A549 (cell line): ENCODE measurements at regions of chr17 and their contacts with region 1.

Region 1: DNA sequence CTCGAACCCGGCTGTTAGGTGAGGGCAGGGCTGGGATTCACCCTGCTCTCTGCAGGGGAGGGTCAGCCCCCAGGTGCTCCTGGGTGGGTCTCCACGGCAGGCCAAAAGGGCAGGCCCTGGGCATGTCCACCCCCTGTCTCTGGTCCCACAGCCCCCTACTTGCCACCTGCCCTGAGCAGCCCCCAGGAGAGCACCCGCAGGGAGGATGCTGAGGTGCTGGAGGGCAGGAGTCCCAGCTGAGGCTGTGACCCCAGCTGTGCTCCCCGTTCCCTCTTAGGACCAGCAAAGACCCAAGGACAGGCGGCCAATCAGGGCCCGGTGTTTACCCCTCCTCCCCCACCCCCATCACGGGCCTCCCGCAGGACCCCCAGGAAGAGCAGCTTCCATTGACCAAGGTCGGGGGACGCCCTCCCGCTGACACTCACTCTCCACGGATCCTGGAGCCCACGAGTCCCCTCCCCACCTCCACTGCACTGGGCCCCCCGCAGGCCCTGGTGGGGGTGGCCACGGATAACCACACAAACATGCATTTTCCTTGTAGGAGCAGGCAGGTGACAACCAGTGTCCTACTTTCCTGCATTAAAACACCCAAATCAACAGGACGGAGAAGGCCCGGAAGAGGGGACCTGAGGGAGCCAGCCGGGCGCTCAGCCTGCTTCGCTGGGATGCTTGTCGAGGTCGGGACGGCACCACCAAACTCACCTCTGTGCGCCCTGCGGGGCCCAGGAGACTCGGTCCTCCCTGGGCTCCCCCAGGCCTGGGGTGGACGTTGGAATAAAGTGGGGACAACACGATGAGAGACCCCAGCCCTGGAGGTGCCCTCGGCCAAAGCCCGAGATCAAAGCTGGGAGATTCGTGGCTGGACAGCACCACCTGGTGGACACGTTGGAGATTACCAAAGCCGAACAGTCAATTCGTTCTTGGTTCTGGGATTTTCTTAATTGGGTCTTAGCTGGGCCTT is 22.5 kb upstream of the ENPP7 start:
- DNase-seq: peak; percentile 66 to 71
- ATAC-seq: peak; percentile 58 to 80
- H3K4me3 ChIP-seq: no peak overlapping the region
- H3K27ac ChIP-seq: peak overlapping the region; percentile 63 to 77; a peak in 5 of 6 replicates
- H3K4me1 ChIP-seq: peaks cover 17% of the 10 kb centered on the region
- CTCF ChIP-seq: peak; percentile 96
- EP300 ChIP-seq: no peak
- POLR2A ChIP-seq: no peak
- RAD21 ChIP-seq: peak; percentile 96 to 97

Region 2: GRCh38 chr17:79065105-79065670 is 643.0 kb before region 1 on chr17:
- CTCF ChIA-PET with region 1: interaction called, 12 read pairs
- POLR2A ChIA-PET with region 1: no interaction called
- DNase-seq: peak; percentile 57 to 73
- ATAC-seq: peak; percentile 64 to 81; a peak in 5 of 6 replicates
- H3K4me3 ChIP-seq: no peak overlapping the region
- H3K27ac ChIP-seq: no peak overlapping the region
- H3K4me1 ChIP-seq: no peaks in the 10 kb centered on the region
- CTCF ChIP-seq: peak; percentile 80
- EP300 ChIP-seq: no peak
- POLR2A ChIP-seq: no peak
- RAD21 ChIP-seq: peak; percentile 69 to 76

Region 3: DNA sequence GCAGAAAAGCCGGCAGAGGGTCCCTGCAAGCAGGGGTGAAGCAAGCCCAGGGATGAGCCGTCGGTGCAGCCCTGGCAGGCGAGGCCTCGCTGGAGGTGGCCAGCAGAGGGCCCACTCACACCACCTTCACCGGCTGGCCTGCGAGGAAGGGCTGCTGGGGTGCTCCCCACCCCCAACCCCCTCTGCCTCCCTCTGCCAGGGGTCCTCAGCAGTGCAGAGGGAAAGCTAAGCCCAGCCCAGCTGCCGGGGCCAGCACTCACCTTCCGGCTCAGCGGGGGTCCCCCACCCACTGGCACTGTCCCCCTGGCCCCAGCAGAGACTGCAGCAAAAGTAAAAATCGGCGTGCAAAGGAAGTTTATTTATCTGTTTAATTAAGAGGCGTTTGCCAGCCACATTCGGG is 520.2 kb before region 1 on chr17:
- CTCF ChIA-PET with region 1: interaction called, 32 read pairs
- POLR2A ChIA-PET with region 1: no interaction called
- DNase-seq: peak; percentile 50 to 88
- ATAC-seq: peak; percentile 57 to 79; a peak in 4 of 6 replicates
- H3K4me3 ChIP-seq: no peak overlapping the region
- H3K27ac ChIP-seq: no peak overlapping the region
- H3K4me1 ChIP-seq: no peaks in the 10 kb centered on the region; the same call in 2 of the 3 replicates
- CTCF ChIP-seq: peak; percentile 88
- EP300 ChIP-seq: no peak
- POLR2A ChIP-seq: no peak
- RAD21 ChIP-seq: peak; percentile 82 to 94

Region 4: GRCh38 chr17:79695797-79696609 is 12.2 kb before region 1 on chr17:
- CTCF ChIA-PET with region 1: interaction called, 73 read pairs
- POLR2A ChIA-PET with region 1: no interaction called
- DNase-seq: no peak
- ATAC-seq: peak; percentile 22 to 65; a peak in 4 of 6 replicates
- H3K4me3 ChIP-seq: no peak overlapping the region
- H3K27ac ChIP-seq: peak overlapping the region; percentile 19 to 51; a peak in 5 of 6 replicates
- H3K4me1 ChIP-seq: peaks cover 35% of the 10 kb centered on the region
- CTCF ChIP-seq: no peak
- EP300 ChIP-seq: no peak
- POLR2A ChIP-seq: no peak
- RAD21 ChIP-seq: no peak

Region 5: GRCh38 chr17:79721993-79722671 is 13.9 kb after region 1 on chr17:
- CTCF ChIA-PET with region 1: interaction called, 32 read pairs
- POLR2A ChIA-PET with region 1: interaction called, 6 read pairs
- DNase-seq: peak; percentile 67 to 87
- ATAC-seq: peak; percentile 84 to 95
- H3K4me3 ChIP-seq: no peak overlapping the region
- H3K27ac ChIP-seq: no peak overlapping the region
- H3K4me1 ChIP-seq: no peaks in the 10 kb centered on the region
- CTCF ChIP-seq: peak; percentile 50
- EP300 ChIP-seq: no peak
- POLR2A ChIP-seq: no peak
- RAD21 ChIP-seq: peak; percentile 53 to 70; a peak in 4 of 5 replicates